Activated naive CD4-positive, alpha-beta T cell treated with anti-CD3 and anti-CD28 coated beads for 36 hours (primary cell): ENCODE measurements at regions of chr11 and their contacts with region 1.

Region 1: GRCh38 chr11:102346748-102347461 is at the start of gene BIRC2:
- DNase-seq: peak; percentile 95
- H3K4me3 Mint-ChIP-seq: peak within 1 kb of the TSS; percentile 77
- H3K27ac Mint-ChIP-seq: peak within 1 kb of the TSS; percentile 99
- H3K4me1 Mint-ChIP-seq: peaks cover 45% of the 10 kb centered on the region
- H3K27me3 Mint-ChIP-seq: no peaks in the 10 kb centered on the region
- total RNA-seq, gene BIRC2: 26.6 to 26.9 TPM

Region 2: GRCh38 chr11:102293873-102294601 is 52.9 kb before region 1 on chr11:
- CTCF ChIA-PET with region 1: interaction called, 49 read pairs
- intact Hi-C with region 1: loop called (anchors 1 kb)
- DNase-seq: peak; percentile 35
- H3K4me3 Mint-ChIP-seq: peak overlapping the region; percentile 74
- H3K27ac Mint-ChIP-seq: peak overlapping the region; percentile 85
- H3K4me1 Mint-ChIP-seq: peaks cover 21% of the 10 kb centered on the region
- H3K27me3 Mint-ChIP-seq: no peaks in the 10 kb centered on the region

Region 3: DNA sequence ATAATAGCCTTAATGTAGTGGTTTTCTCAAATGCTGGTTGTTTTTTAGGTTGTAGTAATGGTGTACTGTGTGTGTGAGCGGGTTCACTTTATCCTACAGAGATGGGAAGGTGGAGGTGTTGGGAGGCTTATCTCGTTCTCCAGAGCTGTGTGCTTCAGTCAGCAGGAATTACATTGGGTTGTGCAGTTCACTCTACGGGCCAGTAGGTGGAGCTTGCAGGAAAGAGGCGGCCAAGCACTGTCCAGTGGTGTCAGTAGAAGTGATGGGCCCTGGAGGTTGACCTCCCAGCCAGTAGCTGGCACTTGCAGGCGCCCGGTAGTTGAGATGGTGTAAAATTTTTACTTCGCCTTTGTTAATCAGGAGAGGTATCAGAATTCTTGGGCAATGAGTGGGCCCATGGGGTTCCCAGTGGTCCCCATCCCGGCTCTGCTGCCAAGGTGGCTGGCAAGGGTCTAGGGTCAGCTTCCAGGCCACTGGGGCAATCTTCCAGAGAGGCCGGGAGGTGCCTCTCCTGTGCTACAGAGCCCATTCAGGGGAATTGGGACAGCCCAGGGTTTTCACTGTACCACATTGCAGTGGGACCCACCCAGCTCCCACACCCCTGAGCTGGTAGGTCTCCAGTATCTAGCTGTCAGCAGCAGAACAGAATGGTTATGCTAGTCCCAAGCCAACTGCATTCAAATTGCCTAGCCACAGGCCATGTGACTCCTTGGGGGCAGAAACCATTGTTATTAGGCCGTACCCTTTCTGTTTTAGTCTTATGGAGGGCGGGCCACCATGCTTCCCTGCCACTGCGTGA is 44.0 kb after region 1 on chr11:
- CTCF ChIA-PET with region 1: interaction called, 29 read pairs
- intact Hi-C with region 1: loop called (anchors 1 kb)
- DNase-seq: peak; percentile 72
- H3K4me3 Mint-ChIP-seq: no peak overlapping the region
- H3K27ac Mint-ChIP-seq: peak overlapping the region; percentile 29
- H3K4me1 Mint-ChIP-seq: peaks cover 40% of the 10 kb centered on the region
- H3K27me3 Mint-ChIP-seq: no peaks in the 10 kb centered on the region

Region 4: GRCh38 chr11:102430158-102430836 is 83.4 kb after region 1 on chr11:
- CTCF ChIA-PET with region 1: interaction called, 4 read pairs
- intact Hi-C with region 1: loop called (anchors 1 kb)
- DNase-seq: peak; percentile 86
- H3K4me3 Mint-ChIP-seq: peak overlapping the region; percentile 44
- H3K27ac Mint-ChIP-seq: peak overlapping the region; percentile 95
- H3K4me1 Mint-ChIP-seq: peaks cover 75% of the 10 kb centered on the region
- H3K27me3 Mint-ChIP-seq: no peaks in the 10 kb centered on the region

Region 5: DNA sequence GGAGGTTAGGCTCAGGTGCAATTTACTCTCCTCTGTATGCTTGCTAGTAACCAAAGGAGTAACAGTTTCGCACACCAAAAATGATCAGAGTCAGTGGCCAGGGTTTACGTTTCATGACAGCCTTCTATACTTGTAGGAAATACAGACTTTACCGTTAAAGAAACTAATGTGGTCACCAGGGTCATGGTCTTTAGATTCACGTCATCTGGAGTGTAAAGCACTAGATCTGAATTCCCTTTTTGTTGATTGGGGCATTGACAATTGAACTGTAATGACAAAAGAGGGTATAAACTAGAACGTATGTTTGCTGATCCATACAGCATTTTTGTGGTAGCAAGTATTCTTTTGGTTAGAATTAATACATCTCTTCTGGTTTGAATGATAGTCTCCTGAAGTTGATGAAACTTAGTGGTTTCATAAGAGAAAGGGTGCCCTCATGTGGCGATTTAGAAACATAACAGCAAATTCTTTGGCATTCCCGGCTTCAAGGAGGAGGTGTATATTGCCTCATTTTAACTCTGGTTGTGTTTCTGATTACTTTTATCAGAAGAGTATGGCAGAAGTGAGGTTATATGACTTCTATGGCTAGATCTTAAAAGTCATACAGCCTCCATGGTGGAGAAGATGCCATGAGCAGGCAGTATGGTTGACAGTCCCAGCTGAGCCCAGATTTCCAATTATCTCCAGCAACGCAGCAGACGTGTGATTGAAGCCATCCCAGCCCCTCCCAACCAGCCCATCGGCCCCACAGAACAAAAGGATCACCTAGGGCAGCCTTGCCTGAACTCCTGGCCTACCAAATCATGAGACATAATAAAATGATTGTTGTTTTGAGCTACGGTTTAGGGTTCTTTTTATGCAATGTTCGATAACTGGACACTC is 148.5 kb after region 1 on chr11:
- CTCF ChIA-PET with region 1: interaction called, 50 read pairs
- intact Hi-C with region 1: loop called (anchors 1 kb)
- DNase-seq: peak; percentile 53
- H3K4me3 Mint-ChIP-seq: no peak overlapping the region
- H3K27ac Mint-ChIP-seq: no peak overlapping the region
- H3K4me1 Mint-ChIP-seq: peaks cover 25% of the 10 kb centered on the region
- H3K27me3 Mint-ChIP-seq: no peaks in the 10 kb centered on the region

Region 6: GRCh38 chr11:102666331-102666957 is 319.5 kb after region 1 on chr11:
- CTCF ChIA-PET with region 1: interaction called, 45 read pairs
- intact Hi-C with region 1: loop called (anchors 1 kb)
- DNase-seq: peak; percentile 28
- H3K4me3 Mint-ChIP-seq: no peak overlapping the region
- H3K27ac Mint-ChIP-seq: no peak overlapping the region
- H3K4me1 Mint-ChIP-seq: no peaks in the 10 kb centered on the region
- H3K27me3 Mint-ChIP-seq: no peaks in the 10 kb centered on the region